ENCODE measurements at regions of chrX and their contacts with region 1.

Region 1: GRCh38 chrX:78923198-78924015 is 21.8 kb upstream of the P2RY10 start:
- DNase-seq: no peak
- ATAC-seq: peak; percentile 58
- H3K4me3 Mint-ChIP-seq: peak overlapping the region; percentile 58
- H3K27ac Mint-ChIP-seq: peak overlapping the region; percentile 88
- H3K4me1 Mint-ChIP-seq: peaks cover 16% of the 10 kb centered on the region
- H3K27me3 Mint-ChIP-seq: no peaks in the 10 kb centered on the region
- CTCF ChIP-seq: no peak

Region 2: DNA sequence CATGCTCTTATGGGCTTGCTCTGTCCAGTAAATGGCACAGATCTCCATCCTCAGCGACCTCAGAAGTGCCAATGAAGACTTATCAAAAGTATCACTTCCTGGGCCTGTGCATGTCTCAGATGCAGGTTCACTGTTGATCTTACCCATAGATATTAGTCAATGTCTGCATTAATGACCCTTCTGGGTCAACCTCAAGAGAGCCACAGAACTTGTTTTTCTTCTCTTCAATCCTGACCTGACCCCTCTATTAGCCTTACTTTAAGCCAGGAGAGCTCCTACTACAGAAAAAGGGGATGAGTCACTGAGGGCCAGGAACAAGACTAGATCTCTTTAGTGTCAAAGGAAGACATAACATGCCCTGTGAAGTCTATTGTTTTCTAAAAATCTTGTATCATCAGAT is 22.0 kb before region 1 on chrX:
- CTCF ChIA-PET with region 1: no interaction called
- POLR2A ChIA-PET with region 1: no interaction called
- intact Hi-C with region 1: no loop called
- DNase-seq: no peak
- ATAC-seq: no peak
- H3K4me3 Mint-ChIP-seq: no peak overlapping the region
- H3K27ac Mint-ChIP-seq: no peak overlapping the region
- H3K4me1 Mint-ChIP-seq: no peaks in the 10 kb centered on the region
- H3K27me3 Mint-ChIP-seq: no peaks in the 10 kb centered on the region
- CTCF ChIP-seq: no peak

Region 3: GRCh38 chrX:78957768-78958130 is 34.3 kb after region 1 on chrX:
- CTCF ChIA-PET with region 1: no interaction called
- POLR2A ChIA-PET with region 1: interaction called, 15 read pairs
- intact Hi-C with region 1: no loop called
- DNase-seq: no peak
- ATAC-seq: peak; percentile 85
- H3K4me3 Mint-ChIP-seq: peak overlapping the region; percentile 67
- H3K27ac Mint-ChIP-seq: peak overlapping the region; percentile 89
- H3K4me1 Mint-ChIP-seq: peaks cover 80% of the 10 kb centered on the region
- H3K27me3 Mint-ChIP-seq: no peaks in the 10 kb centered on the region
- CTCF ChIP-seq: no peak